Spleen (tissue), 13 donors: ENCODE measurements at regions of chr13 and their contacts with region 1.

Region 1: GRCh38 chr13:28324181-28324789 is 170.6 kb downstream of the FLT1 start:
- DNase-seq: no peak
- H3K4me3 ChIP-seq: no peak overlapping the region
- H3K27ac ChIP-seq: peak overlapping the region in 6 of 8 donors; percentile 1 to 63 (median 44)
- H3K4me1 ChIP-seq: peaks cover 0 to 31% (median 20%) of the 10 kb centered on the region in 6 donors
- H3K27me3 ChIP-seq: no peaks in the 10 kb centered on the region
- CTCF ChIP-seq: peak; percentile 47 to 78 (median 72)
- POLR2A ChIP-seq: no peak

Region 2: GRCh38 chr13:28548872-28549271 is 224.6 kb after region 1 on chr13:
- intact Hi-C with region 1: no loop called
- DNase-seq: no peak
- H3K4me3 ChIP-seq: no peak overlapping the region
- H3K27ac ChIP-seq: no peak overlapping the region
- H3K4me1 ChIP-seq: no peaks in the 10 kb centered on the region
- H3K27me3 ChIP-seq: peaks cover 0 to 13% (median 0%) of the 10 kb centered on the region in 7 donors
- CTCF ChIP-seq: no peak
- POLR2A ChIP-seq: no peak

Region 3: GRCh38 chr13:28636674-28637317 is 312.5 kb after region 1 on chr13:
- intact Hi-C with region 1: loop called (anchors 5 kb)
- DNase-seq: no peak
- H3K4me3 ChIP-seq: no peak overlapping the region
- H3K27ac ChIP-seq: peak overlapping the region in 3 of 8 donors; percentile 35 to 60 (median 60)
- H3K4me1 ChIP-seq: peaks cover 0 to 50% (median 25%) of the 10 kb centered on the region in 6 donors
- H3K27me3 ChIP-seq: no peaks in the 10 kb centered on the region
- CTCF ChIP-seq: peak; percentile 66 to 91 (median 80)
- POLR2A ChIP-seq: no peak

Region 4: DNA sequence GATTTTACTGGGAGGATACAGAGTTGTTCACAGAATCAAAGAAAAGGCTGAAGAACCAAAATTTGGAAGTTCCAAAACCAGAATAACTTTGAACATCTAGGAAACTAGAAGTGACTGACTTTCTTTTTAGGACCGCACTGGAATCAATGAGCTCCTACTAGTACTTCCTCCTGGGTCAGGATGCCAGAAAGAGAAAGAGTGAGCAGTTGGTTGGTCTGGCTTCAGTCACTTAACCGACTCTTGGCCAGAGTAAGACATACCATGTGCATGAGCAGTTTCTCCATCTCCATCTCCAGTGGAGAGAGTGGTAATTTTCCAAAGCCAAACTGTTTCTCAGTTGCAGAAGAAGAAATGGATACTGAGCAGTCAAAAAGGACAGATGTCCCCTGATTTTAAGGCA is 468.7 kb after region 1 on chr13:
- intact Hi-C with region 1: loop called (anchors 10 kb)
- DNase-seq: no peak
- H3K4me3 ChIP-seq: no peak overlapping the region
- H3K27ac ChIP-seq: no peak overlapping the region
- H3K4me1 ChIP-seq: peaks cover 0 to 10% (median 3%) of the 10 kb centered on the region in 6 donors
- H3K27me3 ChIP-seq: peaks cover 0 to 40% (median 0%) of the 10 kb centered on the region in 7 donors
- CTCF ChIP-seq: no peak
- POLR2A ChIP-seq: no peak